ENCODE measurements at regions of chr1 and their contacts with region 1.

Region 1: DNA sequence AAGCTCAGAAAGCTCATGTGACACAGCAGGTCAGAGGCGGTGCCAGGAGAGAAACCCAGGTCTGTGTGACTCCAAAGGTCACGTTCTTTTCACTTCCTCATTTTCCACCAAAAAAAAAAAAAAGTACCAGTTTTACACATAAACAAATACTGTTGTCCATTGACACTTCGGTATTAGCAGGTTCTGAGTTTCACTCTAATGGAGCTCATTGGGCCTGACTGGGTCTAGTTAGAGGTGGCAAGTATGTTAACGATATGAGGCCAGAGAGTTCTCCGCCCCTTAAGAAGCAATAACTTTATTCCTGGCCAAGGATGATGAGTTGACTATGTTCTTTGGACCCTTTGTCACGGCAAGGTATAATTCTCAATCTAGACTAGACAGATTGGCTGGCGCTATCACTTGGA is 30.0 kb upstream of the SDE2 start:
- DNase-seq: no peak
- ATAC-seq: no peak
- H3K4me3 ChIP-seq: no peak overlapping the region
- H3K27ac ChIP-seq: no peak overlapping the region
- H3K4me1 ChIP-seq: no peaks in the 10 kb centered on the region
- H3K27me3 ChIP-seq: no peaks in the 10 kb centered on the region
- CTCF ChIP-seq: no peak

Region 2: DNA sequence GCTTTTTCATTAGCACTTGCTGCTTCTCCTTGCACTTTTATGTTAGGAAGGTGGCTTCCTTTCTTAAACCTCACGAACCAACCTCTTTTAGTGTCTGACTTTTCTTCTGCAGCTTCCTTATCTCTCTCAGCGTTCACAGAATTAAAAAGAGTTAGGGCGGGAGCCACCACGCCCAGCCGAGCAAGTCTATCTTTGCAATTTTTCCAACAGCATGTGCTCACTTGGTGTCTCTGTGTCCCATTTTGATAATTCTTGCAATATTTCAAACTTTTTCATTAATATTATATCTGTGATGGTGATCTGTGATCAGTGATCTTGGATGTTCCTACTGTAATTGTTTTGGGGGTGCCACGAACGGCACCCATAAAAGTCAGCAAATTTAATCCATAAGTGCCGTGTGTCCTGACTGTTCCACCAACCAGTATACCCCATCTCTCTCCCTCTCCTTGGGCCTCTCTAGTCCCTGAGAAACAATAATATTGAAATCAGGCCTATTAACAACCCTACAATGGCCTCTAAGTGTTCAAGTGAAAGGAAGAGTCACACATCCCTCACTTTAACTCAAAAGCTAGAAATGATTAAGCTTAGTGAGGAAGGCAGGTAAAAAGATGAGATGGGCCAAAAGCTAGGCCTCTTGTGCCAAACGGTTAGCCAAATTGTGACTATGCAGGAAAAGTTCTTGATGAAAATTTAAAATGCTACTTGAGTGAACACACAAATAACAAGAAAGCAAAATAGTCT is 725.9 kb after region 1 on chr1:
- CTCF ChIA-PET with region 1: no interaction called
- POLR2A ChIA-PET with region 1: no interaction called
- in situ Hi-C with region 1: no loop called
- intact Hi-C with region 1: loop called (anchors 10 kb)
- DNase-seq: no peak
- ATAC-seq: no peak
- H3K4me3 ChIP-seq: no peak overlapping the region
- H3K27ac ChIP-seq: no peak overlapping the region
- H3K4me1 ChIP-seq: no peaks in the 10 kb centered on the region
- H3K27me3 ChIP-seq: no peaks in the 10 kb centered on the region
- CTCF ChIP-seq: no peak